Activated CD4-positive, alpha-beta T cell treated with anti-CD3 and anti-CD28 coated beads for 36 hours (primary cell): ENCODE measurements at regions of chr1 and their contacts with region 1.

Region 1: GRCh38 chr1:183915625-183916510 is 110.9 kb downstream of the RGL1 start:
- DNase-seq: peak; percentile 82
- ATAC-seq: peak; percentile 99
- H3K4me3 Mint-ChIP-seq: no peak overlapping the region
- H3K27ac Mint-ChIP-seq: no peak overlapping the region
- H3K4me1 Mint-ChIP-seq: peaks cover 19% of the 10 kb centered on the region
- H3K27me3 Mint-ChIP-seq: no peaks in the 10 kb centered on the region

Region 2: GRCh38 chr1:183655562-183656075 is 260.2 kb before region 1 on chr1:
- CTCF ChIA-PET with region 1: interaction called, 90 read pairs
- POLR2A ChIA-PET with region 1: no interaction called
- intact Hi-C with region 1: loop called (anchors 1 kb)
- DNase-seq: peak; percentile 86
- ATAC-seq: peak; percentile 27
- H3K4me3 Mint-ChIP-seq: no peak overlapping the region
- H3K27ac Mint-ChIP-seq: no peak overlapping the region
- H3K4me1 Mint-ChIP-seq: peaks cover 35% of the 10 kb centered on the region
- H3K27me3 Mint-ChIP-seq: no peaks in the 10 kb centered on the region

Region 3: GRCh38 chr1:183804881-183805841 is 110.7 kb before region 1 on chr1 and contains the start of gene RGL1:
- CTCF ChIA-PET with region 1: no interaction called
- POLR2A ChIA-PET with region 1: no interaction called
- intact Hi-C with region 1: loop called in 1 of 2 experiments (anchors 10 kb)
- DNase-seq: peak; percentile 55
- ATAC-seq: peak; percentile 80
- H3K4me3 Mint-ChIP-seq: peak within 1 kb of the TSS; percentile 80
- H3K27ac Mint-ChIP-seq: peak within 1 kb of the TSS; percentile 43
- H3K4me1 Mint-ChIP-seq: peaks cover 11% of the 10 kb centered on the region
- H3K27me3 Mint-ChIP-seq: peaks cover 13% of the 10 kb centered on the region
- total RNA-seq, gene RGL1: 2.0 TPM

Region 4: DNA sequence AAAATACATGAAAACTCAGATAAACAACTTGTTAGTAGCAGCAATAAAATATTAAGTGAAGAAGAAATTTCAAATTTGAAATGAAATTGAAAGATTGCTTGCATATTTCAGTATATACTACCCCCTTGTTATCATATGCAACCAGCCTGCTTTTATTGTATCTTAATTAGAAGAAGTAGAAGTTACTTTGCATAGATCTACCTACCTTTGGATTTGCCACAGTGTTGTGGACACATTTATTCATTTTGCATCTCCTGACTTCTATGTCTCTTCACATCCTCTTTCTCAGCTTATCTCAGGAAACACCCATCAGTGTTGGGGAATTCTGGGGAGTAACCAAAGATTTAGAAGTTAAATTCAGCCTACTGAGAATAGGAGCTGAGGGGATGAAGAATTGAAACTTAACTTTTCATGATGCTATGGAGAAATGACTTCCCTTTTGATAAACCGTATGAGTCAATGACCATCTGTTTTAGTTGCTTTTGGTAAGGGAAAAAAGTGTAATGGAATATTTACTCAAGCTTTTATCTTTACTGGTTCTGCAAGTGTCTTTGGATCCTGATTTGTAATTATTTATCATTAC is 14.0 kb before region 1 on chr1:
- CTCF ChIA-PET with region 1: interaction called, 16 read pairs
- POLR2A ChIA-PET with region 1: interaction called, 3 read pairs
- intact Hi-C with region 1: no loop called
- DNase-seq: no peak
- ATAC-seq: peak; percentile 74
- H3K4me3 Mint-ChIP-seq: no peak overlapping the region
- H3K27ac Mint-ChIP-seq: peak overlapping the region; percentile 55
- H3K4me1 Mint-ChIP-seq: peaks cover 11% of the 10 kb centered on the region
- H3K27me3 Mint-ChIP-seq: no peaks in the 10 kb centered on the region

Region 5: DNA sequence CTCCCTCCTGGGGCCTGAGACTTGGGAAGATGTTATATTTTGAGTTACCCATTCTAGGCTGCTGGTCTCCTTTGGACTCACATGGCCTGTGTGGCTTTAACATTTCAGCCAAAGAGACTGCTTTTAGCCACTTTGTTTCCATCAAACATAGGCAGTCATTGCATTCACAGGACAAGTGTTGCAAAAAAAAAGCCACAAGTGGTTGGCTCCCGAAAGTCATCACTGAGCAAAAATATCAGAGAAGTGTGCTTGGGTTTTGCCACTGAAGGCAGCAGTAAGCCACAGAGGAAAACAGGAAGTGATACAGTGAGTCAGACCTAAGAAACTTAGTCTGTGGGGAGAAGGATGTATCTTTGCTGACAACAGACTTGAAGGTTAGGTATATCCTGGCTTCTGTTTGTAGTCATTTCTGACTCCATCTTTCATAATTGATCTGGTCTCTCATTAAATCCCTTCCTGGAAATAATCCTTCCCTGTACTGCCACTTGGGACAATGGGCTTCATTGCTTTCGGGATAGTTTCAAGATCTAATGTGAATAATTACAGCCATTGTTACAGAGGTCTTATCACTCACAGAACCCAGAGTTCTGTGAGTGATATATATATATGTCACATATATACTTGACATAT is 40.8 kb after region 1 on chr1:
- CTCF ChIA-PET with region 1: interaction called, 18 read pairs
- POLR2A ChIA-PET with region 1: no interaction called
- intact Hi-C with region 1: loop called in 1 of 2 experiments (anchors 2 kb)
- DNase-seq: peak; percentile 67
- ATAC-seq: peak; percentile 99
- H3K4me3 Mint-ChIP-seq: no peak overlapping the region
- H3K27ac Mint-ChIP-seq: peak overlapping the region; percentile 77
- H3K4me1 Mint-ChIP-seq: peaks cover 7% of the 10 kb centered on the region
- H3K27me3 Mint-ChIP-seq: no peaks in the 10 kb centered on the region